GM10248 (cell line): ENCODE measurements at regions of chr1 and their contacts with region 1.

Region 1: GRCh38 chr1:35715568-35716002 is 3.1 kb downstream of the C1orf216 start:
- DNase-seq: peak; percentile 85
- CTCF ChIP-seq: peak; percentile 86

Region 2: DNA sequence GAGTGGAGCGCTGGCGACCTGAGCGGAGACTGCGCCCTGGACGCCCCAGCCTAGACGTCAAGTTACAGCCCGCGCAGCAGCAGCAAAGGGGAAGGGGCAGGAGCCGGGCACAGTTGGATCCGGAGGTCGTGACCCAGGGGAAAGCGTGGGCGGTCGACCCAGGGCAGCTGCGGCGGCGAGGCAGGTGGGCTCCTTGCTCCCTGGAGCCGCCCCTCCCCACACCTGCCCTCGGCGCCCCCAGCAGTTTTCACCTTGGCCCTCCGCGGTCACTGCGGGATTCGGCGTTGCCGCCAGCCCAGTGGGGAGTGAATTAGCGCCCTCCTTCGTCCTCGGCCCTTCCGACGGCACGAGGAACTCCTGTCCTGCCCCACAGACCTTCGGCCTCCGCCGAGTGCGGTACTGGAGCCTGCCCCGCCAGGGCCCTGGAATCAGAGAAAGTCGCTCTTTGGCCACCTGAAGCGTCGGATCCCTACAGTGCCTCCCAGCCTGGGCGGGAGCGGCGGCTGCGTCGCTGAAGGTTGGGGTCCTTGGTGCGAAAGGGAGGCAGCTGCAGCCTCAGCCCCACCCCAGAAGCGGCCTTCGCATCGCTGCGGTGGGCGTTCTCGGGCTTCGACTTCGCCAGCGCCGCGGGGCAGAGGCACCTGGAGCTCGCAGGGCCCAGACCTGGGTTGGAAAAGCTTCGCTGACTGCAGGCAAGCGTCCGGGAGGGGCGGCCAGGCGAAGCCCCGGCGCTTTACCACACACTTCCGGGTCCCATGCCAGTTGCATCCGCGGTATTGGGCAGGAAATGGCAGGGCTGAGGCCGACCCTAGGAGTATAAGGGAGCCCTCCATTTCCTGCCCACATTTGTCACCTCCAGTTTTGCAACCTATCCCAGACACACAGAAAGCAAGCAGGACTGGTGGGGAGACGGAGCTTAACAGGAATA is 138.2 kb before region 1 on chr1:
- CTCF ChIA-PET with region 1: interaction called, 31 read pairs
- POLR2A ChIA-PET with region 1: no interaction called
- DNase-seq: peak; percentile 69
- CTCF ChIP-seq: no peak

Region 3: GRCh38 chr1:35691080-35691479 is 24.5 kb before region 1 on chr1:
- CTCF ChIA-PET with region 1: interaction called, 27 read pairs
- POLR2A ChIA-PET with region 1: interaction called, 3 read pairs
- DNase-seq: no peak
- CTCF ChIP-seq: no peak

Region 4: DNA sequence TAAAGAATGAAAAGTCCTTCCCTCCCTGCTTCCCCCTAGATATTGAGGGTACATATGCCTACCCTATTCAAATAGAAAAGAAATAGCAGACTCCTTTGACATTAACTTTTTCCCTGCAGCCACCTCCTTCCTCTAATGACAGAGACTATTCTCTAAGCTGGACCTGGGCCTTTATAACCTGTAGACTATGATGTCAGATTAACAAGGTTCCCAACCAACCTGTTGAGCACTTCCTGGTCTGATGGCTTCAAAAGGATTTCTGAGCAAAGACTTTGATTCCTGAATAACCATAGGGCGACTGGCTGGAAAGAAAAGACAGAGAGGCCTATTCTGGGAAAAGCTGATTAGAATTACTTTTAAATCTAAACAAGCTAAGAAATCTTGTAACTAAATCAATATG is 21.5 kb after region 1 on chr1:
- CTCF ChIA-PET with region 1: interaction called, 211 read pairs
- POLR2A ChIA-PET with region 1: no interaction called
- DNase-seq: no peak
- CTCF ChIP-seq: no peak

Region 5: DNA sequence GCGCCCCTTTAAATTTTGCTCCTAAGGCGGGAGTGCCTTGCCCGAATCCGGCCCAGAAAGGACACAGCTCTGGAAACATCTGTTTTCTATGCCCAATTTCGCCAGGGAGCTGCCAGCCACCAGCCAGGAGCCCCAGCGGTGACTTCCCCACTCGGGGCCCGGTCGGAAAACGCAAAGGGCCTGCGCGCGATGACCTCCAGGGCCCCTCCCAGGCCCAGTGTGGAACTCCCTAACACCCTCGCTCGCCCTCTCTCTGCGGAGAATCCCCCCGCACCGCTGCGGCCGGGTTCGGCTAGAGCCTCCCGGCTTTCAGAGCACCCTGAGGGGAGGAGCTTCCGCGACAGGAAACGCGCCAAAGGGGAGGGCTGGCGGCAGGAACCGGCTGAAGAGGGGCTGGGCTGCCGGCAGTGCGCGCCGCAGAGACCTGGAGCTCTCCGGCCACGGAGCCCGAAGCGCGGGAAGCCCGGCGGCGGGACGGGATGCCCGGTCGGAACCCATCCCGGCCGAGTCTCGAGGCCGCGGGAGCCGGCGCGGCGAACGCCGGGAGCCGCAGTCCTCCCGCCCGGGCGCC is 53.7 kb after region 1 on chr1:
- CTCF ChIA-PET with region 1: interaction called, 18 read pairs
- POLR2A ChIA-PET with region 1: no interaction called
- DNase-seq: peak; percentile 94
- CTCF ChIP-seq: no peak